ENCODE measurements at regions of chr4 and their contacts with region 1.

Region 1: GRCh38 chr4:79958466-79959264 is 114.4 kb downstream of the ANTXR2 start:
- DNase-seq: no peak
- ATAC-seq: no peak
- H3K4me3 ChIP-seq: no peak overlapping the region
- H3K27ac ChIP-seq: no peak overlapping the region
- H3K4me1 ChIP-seq: peaks cover 0 to 9% (median 0%) of the 10 kb centered on the region in 12 donors
- H3K27me3 ChIP-seq: no peaks in the 10 kb centered on the region
- CTCF ChIP-seq: no peak
- POLR2A ChIP-seq: no peak

Region 2: DNA sequence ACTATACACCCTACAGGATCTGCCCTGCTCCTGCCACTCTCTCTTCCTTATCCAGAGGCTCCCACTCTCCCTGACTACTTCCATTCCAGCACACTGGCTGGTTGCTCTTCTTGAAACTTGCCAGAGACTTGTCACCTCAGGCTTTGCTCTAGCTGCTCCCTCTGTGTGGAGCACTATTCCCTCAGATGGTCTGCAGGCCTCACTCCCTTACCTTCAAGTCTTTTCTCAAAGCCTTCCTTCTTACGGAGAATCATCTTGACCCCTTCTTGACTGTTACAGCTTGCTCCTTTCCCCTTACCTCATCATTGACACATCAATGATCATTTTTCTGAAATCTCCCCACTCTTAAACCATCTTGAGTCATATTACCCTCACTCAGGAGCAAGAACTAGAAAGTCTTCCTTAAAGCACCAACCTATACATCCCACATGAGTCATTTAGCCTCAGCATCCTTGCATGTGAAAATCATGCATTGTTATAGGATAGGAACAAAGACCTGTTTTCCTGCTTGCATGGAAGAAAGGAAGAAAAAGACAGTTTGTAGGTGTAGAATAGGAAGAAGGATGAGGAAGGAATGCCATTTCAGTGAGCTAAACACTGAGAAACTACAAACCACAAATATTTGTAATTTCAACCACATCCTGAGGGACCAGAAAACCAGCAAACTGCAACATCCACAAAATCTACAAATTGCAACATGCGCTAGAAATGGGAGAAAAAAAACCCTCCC is 58.6 kb after region 1 on chr4:
- intact Hi-C with region 1: loop called in 1 of 10 experiments (anchors 10 kb)
- DNase-seq: no peak
- ATAC-seq: peak in 2 of 4 donors; percentile 14 to 20
- H3K4me3 ChIP-seq: no peak overlapping the region
- H3K27ac ChIP-seq: peak overlapping the region in 2 of 12 donors; percentile 35 to 63
- H3K4me1 ChIP-seq: peaks cover 0 to 32% (median 0%) of the 10 kb centered on the region in 12 donors
- H3K27me3 ChIP-seq: no peaks in the 10 kb centered on the region
- CTCF ChIP-seq: no peak
- POLR2A ChIP-seq: no peak

Measured in heart left ventricle (tissue), 16 donors.